ENCODE measurements at regions of chr9 and their contacts with region 1.

Region 1: DNA sequence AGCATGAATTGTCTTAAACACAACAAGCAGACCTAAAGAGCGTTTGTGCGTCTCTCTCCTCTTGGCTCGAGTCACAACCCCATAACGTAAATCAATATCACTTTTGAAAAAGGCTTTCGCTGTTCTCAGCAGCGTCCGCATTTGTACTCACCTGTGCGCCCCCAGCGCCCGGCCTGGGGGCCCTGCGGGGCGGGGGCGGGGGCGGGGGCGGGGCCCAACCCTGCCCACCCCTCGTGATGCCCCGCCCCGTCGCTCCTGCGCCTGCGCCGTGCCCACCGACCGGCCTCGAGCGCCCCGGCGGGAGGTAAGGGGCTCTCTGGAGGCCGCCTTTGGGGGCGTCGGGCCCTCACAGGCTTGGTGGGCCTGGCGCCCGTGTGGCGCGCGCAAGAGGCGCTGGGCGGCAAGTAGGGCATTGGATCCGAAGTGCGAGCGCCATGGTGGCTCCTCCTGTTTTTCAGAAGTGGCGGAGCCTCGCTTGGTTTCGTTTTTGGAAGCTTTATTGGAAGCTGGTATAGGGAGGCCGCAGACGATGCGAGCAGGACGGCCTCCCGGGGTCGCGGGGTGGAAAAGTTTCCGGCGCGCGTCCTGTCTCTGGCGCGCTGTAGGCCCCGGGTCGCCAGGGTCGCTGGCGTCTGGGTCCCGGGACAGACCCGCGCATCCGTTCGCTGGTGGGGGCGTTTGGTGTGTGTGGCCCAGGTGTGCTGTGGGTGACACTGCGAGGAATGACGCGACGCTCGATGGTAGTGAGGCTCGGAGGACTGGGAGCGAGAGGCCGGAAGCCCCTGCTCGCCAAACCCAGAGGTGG is at the start of gene STX17:
- DNase-seq: peak; percentile 90
- ATAC-seq: peak; percentile 87
- H3K4me3 Mint-ChIP-seq: peak within 1 kb of the TSS; percentile 98
- H3K27ac Mint-ChIP-seq: peak within 1 kb of the TSS; percentile 95
- H3K4me1 Mint-ChIP-seq: peaks cover 17% of the 10 kb centered on the region
- H3K27me3 Mint-ChIP-seq: no peaks in the 10 kb centered on the region
- CTCF ChIP-seq: no peak
- total RNA-seq, gene STX17: 32.2 and 39.2 TPM in 2 replicates

Region 2: DNA sequence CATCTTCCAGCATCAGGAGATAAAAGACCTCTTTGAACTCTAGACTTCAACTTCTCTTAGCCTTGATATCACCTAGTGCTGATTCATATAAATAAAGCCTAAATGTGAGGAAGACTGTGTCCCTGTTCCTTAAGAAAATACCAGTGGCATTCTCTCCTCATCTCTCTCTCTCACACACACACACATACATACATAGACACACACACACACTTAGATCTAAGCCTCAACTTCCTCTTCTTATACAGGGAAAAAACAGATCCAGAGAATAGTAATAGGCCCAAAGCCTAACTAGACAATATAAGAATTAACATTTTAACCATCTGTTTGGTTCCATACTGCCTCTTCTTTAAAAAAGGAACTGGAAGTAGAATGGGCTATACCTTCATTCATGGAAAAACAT is 280.2 kb before region 1 on chr9:
- CTCF ChIA-PET with region 1: no interaction called
- POLR2A ChIA-PET with region 1: no interaction called
- intact Hi-C with region 1: no loop called
- DNase-seq: no peak
- ATAC-seq: no peak
- H3K4me3 Mint-ChIP-seq: no peak overlapping the region
- H3K27ac Mint-ChIP-seq: no peak overlapping the region
- H3K4me1 Mint-ChIP-seq: peaks cover 20% of the 10 kb centered on the region
- H3K27me3 Mint-ChIP-seq: no peaks in the 10 kb centered on the region
- CTCF ChIP-seq: no peak

Region 3: DNA sequence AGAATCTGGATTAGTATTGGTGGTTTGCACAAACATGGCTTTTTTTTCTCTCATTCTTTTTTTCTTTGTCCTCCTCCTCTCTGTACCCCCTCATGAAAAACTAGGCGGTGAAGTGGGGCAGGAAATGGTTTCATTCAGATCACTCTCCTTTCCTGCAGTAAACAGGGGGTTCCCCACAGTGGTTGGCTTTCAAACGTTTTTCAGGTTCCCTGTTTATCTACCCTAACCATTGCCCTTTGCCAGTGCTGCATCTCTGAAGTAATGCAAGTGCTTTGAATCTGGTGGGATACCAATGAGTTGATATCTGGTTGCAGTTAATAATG is 55.1 kb before region 1 on chr9:
- CTCF ChIA-PET with region 1: no interaction called
- POLR2A ChIA-PET with region 1: no interaction called
- intact Hi-C with region 1: loop called (anchors 2 kb)
- DNase-seq: no peak
- ATAC-seq: peak; percentile 81
- H3K4me3 Mint-ChIP-seq: peak overlapping the region; percentile 26
- H3K27ac Mint-ChIP-seq: peak overlapping the region; percentile 36
- H3K4me1 Mint-ChIP-seq: peaks cover 34% of the 10 kb centered on the region
- H3K27me3 Mint-ChIP-seq: no peaks in the 10 kb centered on the region
- CTCF ChIP-seq: no peak